Activated CD4-positive, alpha-beta memory T cell treated with anti-CD3 and anti-CD28 coated beads for 36 hours (primary cell): ENCODE measurements at regions of chr10 and their contacts with region 1.

Region 1: GRCh38 chr10:70169649-70170364 is 507 bp downstream of the SAR1A start:
- DNase-seq: peak; percentile 15
- H3K4me3 Mint-ChIP-seq: peak overlapping the region; percentile 93
- H3K27ac Mint-ChIP-seq: peak overlapping the region; percentile 94
- H3K4me1 Mint-ChIP-seq: peaks cover 68% of the 10 kb centered on the region
- H3K27me3 Mint-ChIP-seq: no peaks in the 10 kb centered on the region

Region 2: DNA sequence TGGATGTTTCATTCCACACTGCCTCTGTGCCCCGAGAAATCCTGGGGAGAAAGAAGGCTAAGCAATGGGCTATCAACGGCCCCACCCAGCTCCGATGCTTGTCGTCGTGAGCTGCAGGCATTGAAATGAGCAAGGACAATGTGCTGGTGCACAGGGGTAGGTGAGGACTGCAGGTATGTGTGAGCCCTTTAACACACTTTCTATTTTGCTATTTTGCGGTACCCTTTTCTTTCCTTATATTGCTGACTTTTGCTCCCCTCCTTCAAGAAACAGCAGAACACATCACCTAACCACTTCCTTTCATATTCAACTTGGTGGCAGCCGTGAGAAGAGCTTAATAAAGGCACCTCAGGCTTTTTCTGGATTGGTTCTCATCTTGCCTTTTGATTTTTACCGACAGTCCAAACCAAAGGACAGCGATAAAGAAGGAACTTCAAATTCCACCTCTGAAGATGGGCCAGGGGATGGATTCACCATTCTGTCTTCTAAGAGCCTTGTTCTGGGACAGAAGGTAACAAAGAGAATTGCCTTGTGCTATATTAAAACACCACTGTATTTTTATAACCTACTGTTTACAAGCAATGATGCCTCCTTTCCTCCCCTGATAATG is 76.4 kb before region 1 on chr10:
- CTCF ChIA-PET with region 1: no interaction called
- POLR2A ChIA-PET with region 1: no interaction called
- intact Hi-C with region 1: loop called (anchors 2 kb)
- DNase-seq: peak; percentile 51
- H3K4me3 Mint-ChIP-seq: peak overlapping the region; percentile 58
- H3K27ac Mint-ChIP-seq: peak overlapping the region; percentile 7
- H3K4me1 Mint-ChIP-seq: peaks cover 34% of the 10 kb centered on the region
- H3K27me3 Mint-ChIP-seq: no peaks in the 10 kb centered on the region

Region 3: GRCh38 chr10:70549962-70550458 is 380.2 kb after region 1 on chr10:
- CTCF ChIA-PET with region 1: no interaction called
- POLR2A ChIA-PET with region 1: no interaction called
- intact Hi-C with region 1: no loop called
- DNase-seq: peak; percentile 82
- H3K4me3 Mint-ChIP-seq: no peak overlapping the region
- H3K27ac Mint-ChIP-seq: no peak overlapping the region
- H3K4me1 Mint-ChIP-seq: no peaks in the 10 kb centered on the region
- H3K27me3 Mint-ChIP-seq: no peaks in the 10 kb centered on the region